Activated CD4-positive, alpha-beta T cell treated with anti-CD3 and anti-CD28 coated beads for 36 hours (primary cell): ENCODE measurements at regions of chr6 and their contacts with region 1.

Region 1: DNA sequence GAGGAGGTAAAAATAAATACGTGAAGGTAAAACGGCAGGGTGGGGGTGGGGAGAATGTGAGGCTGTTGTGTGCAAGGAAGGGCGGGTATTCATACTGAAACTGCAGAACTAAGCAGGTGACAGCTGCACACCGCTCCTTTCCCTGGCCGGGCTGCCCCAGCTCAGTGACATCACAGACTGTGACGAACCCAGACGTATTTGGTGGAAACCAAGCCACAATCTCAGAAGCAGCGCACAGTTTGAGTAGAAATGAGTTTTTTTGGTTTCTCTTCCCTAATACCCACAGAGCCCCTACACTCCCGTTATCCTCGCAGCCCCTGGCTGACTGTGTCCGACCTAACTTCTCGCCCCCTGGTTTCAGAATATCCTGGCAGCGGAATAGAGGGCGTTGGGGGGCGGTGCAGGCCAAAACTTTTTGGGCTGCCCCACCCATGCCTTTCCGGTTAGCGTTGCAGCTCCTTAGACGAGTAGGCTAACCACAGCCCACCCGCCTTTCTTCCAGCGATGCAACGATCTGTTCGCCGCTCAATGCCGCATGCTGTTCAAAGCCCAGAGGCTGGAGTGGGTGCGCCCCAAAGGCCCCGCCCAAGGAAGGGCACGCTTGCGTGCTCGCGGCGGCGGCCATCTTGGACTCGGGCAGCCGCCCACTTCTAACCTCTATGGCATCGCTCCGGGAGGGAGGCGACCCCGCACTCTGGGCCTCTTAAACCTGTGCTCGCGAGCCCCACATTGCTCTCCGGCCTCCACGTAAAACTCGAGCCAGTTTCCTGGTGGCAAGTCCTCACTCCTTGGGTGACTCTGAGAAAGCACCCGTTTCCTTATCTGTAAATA is 9.1 kb downstream of the BAK1 start:
- DNase-seq: peak; percentile 98
- ATAC-seq: peak; percentile 90
- H3K4me3 Mint-ChIP-seq: peak overlapping the region; percentile 81
- H3K27ac Mint-ChIP-seq: peak overlapping the region; percentile 100
- H3K4me1 Mint-ChIP-seq: peaks cover 42% of the 10 kb centered on the region
- H3K27me3 Mint-ChIP-seq: no peaks in the 10 kb centered on the region

Region 2: GRCh38 chr6:32491700-32492099 is 1079.3 kb before region 1 on chr6:
- CTCF ChIA-PET with region 1: no interaction called
- POLR2A ChIA-PET with region 1: no interaction called
- intact Hi-C with region 1: no loop called
- DNase-seq: no peak
- ATAC-seq: no peak
- H3K4me3 Mint-ChIP-seq: no peak overlapping the region
- H3K27ac Mint-ChIP-seq: no peak overlapping the region
- H3K4me1 Mint-ChIP-seq: peaks cover 3% of the 10 kb centered on the region
- H3K27me3 Mint-ChIP-seq: peaks cover 16% of the 10 kb centered on the region

Region 3: DNA sequence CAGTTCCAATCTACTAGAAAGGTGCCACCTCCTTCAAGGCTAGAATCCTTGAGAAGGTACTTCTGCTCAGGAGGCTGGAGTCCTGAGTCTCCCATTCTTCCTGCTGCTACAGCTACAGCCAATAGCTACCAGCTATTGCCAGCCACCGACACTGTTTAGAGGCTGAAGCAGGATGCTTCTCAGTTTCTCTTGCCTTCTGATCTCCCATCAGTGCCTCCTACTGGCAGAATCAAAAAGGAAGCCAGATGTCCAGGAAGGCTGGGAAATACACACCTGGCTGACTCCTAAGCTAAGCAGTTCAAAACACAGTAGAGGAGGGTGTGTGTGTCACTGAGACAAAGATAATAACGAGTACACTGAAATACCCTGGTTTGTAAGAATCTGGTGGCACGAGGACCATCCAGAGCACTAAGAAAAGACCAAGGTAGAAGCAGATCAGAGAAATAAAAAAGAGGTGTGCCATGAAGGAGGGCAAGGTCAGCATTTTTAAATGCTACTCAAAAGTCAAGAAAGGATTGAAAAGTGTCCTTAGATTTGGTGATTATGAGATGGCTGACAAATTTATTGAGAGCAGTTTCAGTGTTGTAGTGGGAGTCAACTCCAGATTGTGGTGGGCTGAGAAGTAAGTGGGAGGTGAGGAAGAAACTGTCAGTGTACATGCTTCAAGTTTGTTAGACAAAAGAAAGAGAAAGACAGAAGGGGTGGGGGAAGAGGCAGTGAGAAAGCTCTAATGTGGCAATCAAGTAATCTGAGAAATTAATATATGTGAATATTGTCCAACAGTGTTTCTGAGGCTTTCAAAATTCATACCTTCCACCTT is 615.8 kb before region 1 on chr6:
- CTCF ChIA-PET with region 1: no interaction called
- POLR2A ChIA-PET with region 1: no interaction called
- intact Hi-C with region 1: no loop called
- DNase-seq: peak; percentile 55
- ATAC-seq: peak; percentile 31
- H3K4me3 Mint-ChIP-seq: no peak overlapping the region
- H3K27ac Mint-ChIP-seq: peak overlapping the region; percentile 7
- H3K4me1 Mint-ChIP-seq: peaks cover 41% of the 10 kb centered on the region
- H3K27me3 Mint-ChIP-seq: no peaks in the 10 kb centered on the region

Region 4: DNA sequence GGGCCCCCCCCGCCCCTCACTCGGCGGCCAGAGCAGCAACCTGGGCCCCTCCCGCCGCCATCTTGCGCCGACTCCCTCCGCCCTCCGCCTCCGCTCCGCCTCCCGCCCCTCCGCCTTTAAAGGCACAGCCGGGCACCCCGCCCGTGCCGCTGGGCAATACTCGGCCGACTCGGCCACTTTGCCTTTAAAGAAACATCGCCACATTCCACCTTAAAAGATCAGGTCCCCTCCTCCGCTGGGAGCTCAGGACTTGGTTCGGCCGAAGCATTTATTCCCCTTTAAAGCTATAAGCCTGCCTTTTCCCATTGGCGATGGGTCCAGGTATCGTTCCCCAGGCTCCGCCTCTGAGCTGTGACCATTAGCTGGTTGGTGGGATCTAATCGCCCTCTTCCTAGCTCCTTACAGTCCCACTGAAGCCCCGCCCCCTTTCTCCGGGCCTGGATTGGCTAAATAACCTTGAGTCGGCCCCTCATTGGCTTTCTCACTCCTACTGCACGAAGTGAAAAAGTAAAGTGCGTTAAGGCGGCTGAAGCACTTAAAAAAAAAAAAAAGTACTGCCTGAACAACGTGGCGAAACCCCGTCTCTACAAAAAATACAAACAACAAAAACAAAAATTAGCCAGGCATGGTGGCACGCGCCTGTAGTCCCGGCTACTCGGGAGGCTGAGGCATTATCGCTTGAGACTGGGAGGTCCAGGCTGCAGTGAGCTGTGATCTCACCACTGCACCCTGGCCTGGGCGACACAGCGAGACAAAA is 253.2 kb before region 1 on chr6 and contains the start of gene ZBTB22:
- CTCF ChIA-PET with region 1: no interaction called
- POLR2A ChIA-PET with region 1: no interaction called
- intact Hi-C with region 1: loop called (anchors 1 to 10 kb)
- DNase-seq: peak; percentile 98
- ATAC-seq: peak; percentile 69
- H3K4me3 Mint-ChIP-seq: peak within 1 kb of the TSS; percentile 80
- H3K27ac Mint-ChIP-seq: peak within 1 kb of the TSS; percentile 93
- H3K4me1 Mint-ChIP-seq: peaks cover 70% of the 10 kb centered on the region
- H3K27me3 Mint-ChIP-seq: no peaks in the 10 kb centered on the region
- total RNA-seq, gene ZBTB22: 9.0 to 9.9 TPM

Region 5: DNA sequence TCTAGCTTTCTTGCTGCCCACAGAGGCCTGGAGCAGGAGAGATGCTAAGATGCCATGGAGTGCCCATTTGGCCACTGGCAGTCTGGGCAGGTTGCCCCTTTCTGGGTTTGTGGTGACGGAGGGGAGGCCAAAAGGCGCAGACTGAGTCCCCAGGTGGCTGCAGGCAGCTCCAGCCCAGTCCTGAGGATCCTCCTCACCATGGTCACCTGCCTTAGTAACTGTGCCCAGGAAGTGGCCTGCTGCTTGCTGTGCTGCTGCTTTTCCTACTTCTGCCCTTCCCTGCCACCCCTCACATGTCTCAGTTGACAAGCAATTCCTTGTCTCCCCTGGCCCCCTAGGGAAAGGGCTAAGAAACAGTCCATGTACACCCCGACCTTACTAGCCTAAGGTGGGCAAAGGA is 214.7 kb before region 1 on chr6:
- CTCF ChIA-PET with region 1: no interaction called
- POLR2A ChIA-PET with region 1: no interaction called
- intact Hi-C with region 1: no loop called
- DNase-seq: no peak
- ATAC-seq: no peak
- H3K4me3 Mint-ChIP-seq: no peak overlapping the region
- H3K27ac Mint-ChIP-seq: no peak overlapping the region
- H3K4me1 Mint-ChIP-seq: no peaks in the 10 kb centered on the region
- H3K27me3 Mint-ChIP-seq: no peaks in the 10 kb centered on the region

Region 6: DNA sequence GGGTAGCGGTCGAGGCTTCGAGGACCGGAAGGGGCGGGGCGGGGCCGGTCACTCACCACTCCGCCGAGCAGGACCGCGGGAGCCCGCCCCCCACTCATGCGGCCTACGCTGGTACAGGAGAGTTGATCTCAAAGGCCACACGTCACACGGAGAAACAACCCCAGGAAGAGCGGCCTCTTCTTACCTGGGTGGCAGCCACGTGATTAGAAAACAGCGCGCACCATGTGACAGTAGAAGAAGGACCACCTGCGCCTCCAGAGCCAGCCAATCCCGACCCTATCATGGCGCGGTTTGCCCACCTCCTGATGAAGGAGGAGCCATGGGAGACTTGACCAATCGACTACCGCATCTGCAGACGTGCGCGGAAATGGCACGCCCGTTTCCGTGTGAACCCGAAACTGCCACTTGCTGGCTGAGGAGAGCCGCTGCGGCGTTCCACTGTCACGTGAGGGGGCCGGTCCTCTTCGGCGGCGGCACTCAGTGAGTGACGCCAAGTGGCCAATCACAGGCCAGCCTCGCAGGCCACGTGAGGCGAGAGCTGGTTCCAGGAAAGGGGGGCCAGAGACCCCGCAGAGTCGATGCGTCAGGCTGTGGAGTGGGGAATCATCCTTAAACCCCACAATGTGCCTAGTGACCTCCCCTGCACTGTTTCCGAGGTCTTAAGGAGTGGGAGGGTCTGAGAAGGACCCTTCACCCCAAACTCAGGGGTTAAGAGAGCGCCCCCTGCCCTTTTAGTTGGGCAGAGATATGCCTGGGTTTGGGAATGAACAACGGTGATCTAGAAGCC is 152.9 kb before region 1 on chr6 and contains the start of gene CUTA:
- CTCF ChIA-PET with region 1: no interaction called
- POLR2A ChIA-PET with region 1: interaction called, 3 read pairs
- intact Hi-C with region 1: loop called (anchors 1 to 2 kb)
- DNase-seq: peak; percentile 100
- ATAC-seq: peak; percentile 87
- H3K4me3 Mint-ChIP-seq: peak within 1 kb of the TSS; percentile 96
- H3K27ac Mint-ChIP-seq: peak within 1 kb of the TSS; percentile 98
- H3K4me1 Mint-ChIP-seq: peaks cover 54% of the 10 kb centered on the region
- H3K27me3 Mint-ChIP-seq: no peaks in the 10 kb centered on the region
- total RNA-seq, gene CUTA: 154 to 188 TPM

Region 7: GRCh38 chr6:33535104-33535603 is 35.9 kb before region 1 on chr6:
- CTCF ChIA-PET with region 1: no interaction called
- POLR2A ChIA-PET with region 1: interaction called, 3 read pairs
- intact Hi-C with region 1: loop called (anchors 1 to 2 kb)
- DNase-seq: no peak
- ATAC-seq: no peak
- H3K4me3 Mint-ChIP-seq: no peak overlapping the region
- H3K27ac Mint-ChIP-seq: no peak overlapping the region
- H3K4me1 Mint-ChIP-seq: peaks cover 19% of the 10 kb centered on the region
- H3K27me3 Mint-ChIP-seq: no peaks in the 10 kb centered on the region

Region 8: GRCh38 chr6:33585403-33586107 is 14.5 kb after region 1 on chr6:
- CTCF ChIA-PET with region 1: interaction called, 4 read pairs
- POLR2A ChIA-PET with region 1: no interaction called
- intact Hi-C with region 1: loop called in 1 of 2 experiments (anchors 1 kb)
- DNase-seq: peak; percentile 93
- ATAC-seq: peak; percentile 85
- H3K4me3 Mint-ChIP-seq: peak overlapping the region; percentile 66
- H3K27ac Mint-ChIP-seq: peak overlapping the region; percentile 92
- H3K4me1 Mint-ChIP-seq: peaks cover 22% of the 10 kb centered on the region
- H3K27me3 Mint-ChIP-seq: no peaks in the 10 kb centered on the region

Region 9: DNA sequence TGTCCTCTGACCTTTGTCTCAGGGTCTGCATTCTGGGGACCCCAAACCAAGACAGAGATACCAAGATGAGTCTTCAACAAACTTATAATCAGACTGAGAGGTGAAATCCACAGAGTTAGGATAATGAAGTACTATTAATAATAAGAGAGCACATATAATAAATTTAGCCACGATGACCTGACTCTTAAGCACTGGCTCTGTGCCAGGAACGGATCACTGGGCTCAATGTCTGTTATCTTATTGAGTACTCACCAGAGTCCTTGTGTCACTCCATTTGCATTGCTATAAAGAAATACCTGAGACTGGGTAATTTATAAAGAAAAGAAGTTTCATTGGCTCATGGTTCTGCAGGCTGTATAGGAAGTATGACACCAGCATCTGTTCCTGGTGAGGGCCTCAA is 31.2 kb after region 1 on chr6:
- CTCF ChIA-PET with region 1: no interaction called
- POLR2A ChIA-PET with region 1: no interaction called
- intact Hi-C with region 1: no loop called
- DNase-seq: no peak
- ATAC-seq: no peak
- H3K4me3 Mint-ChIP-seq: no peak overlapping the region
- H3K27ac Mint-ChIP-seq: no peak overlapping the region
- H3K4me1 Mint-ChIP-seq: peaks cover 3% of the 10 kb centered on the region
- H3K27me3 Mint-ChIP-seq: peaks cover 2% of the 10 kb centered on the region

Region 10: DNA sequence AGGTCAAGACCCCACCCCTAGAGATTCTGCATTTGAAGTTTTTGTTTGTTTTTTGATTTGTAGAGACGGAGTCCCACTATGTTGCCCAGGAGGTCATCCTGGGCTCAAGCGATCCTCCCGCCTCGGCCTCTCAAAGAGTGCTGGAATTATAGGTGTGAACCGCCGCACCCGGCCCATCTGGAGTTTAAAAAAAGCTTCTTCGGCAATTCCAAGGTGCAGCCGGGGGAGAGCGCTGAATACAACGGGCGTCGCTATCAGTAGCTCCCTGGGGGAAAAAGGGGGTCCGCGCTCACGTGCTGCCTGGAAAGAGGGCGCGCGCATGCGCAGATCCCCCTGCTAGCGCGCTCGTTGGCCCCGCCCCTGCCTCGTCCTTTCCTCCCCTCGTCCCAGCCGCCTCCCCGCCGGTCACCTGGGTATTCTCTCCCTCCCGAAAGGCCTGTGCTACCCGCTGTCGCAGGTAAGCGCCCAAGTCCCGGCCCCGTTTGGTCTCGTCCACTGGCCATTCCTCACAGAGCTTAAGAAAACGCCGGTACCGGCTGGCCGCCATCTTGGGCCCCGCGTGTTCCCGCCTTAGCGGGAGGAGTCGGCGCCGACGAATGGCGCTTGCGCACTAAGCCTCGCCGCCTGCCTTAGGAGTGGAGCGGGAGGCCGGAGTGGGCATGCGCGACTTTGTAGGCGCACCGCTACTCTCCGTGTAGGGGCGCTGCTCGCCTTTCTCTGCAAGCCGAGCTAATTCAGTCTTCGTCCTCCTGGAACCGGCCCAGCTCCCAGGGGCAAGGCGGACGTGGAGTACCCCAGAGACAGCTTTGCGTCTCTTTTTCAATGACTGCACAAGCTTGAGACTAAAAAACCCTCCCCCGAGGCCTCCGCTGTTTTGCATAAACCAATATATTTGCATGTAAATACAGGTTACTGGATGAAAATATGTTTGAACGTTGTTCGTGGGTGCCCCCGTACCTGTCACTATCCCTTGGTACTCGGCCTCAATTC is 140.4 kb after region 1 on chr6 and contains the start of gene UQCC2:
- CTCF ChIA-PET with region 1: interaction called, 3 read pairs
- POLR2A ChIA-PET with region 1: interaction called, 4 read pairs
- intact Hi-C with region 1: loop called in 1 of 2 experiments (anchors 1 kb)
- DNase-seq: peak; percentile 99
- ATAC-seq: peak; percentile 99
- H3K4me3 Mint-ChIP-seq: peak within 1 kb of the TSS; percentile 90
- H3K27ac Mint-ChIP-seq: peak within 1 kb of the TSS; percentile 96
- H3K4me1 Mint-ChIP-seq: peaks cover 34% of the 10 kb centered on the region
- H3K27me3 Mint-ChIP-seq: no peaks in the 10 kb centered on the region
- total RNA-seq, gene UQCC2: 141 to 147 TPM